ENCODE measurements at regions of chr7 and their contacts with region 1.

Region 1: DNA sequence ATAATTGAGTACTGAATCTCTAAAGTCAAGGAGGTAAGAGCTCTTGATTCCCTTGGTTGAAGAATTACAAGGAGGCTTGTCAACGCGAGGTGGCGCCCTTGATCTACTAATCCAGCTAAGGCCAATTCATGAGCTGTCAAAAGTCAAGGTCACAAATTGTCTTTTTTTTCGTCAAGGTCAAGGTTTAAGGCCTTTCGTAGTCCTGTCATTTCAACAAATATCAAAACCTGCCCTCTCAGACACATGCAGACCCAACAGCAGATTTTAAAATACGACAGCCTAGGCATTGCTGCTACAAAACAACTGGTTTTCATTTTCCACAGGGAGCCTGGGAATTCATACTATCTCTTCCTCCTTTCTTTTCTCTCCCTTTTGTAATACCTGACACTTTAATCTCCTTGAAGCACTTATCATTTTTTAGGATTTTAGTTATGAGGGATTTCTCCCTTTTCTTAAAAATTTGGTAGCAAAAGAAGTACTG is 3.6 kb downstream of the HOXA13 start:
- DNase-seq: peak; percentile 67 to 89 (median 83)
- ATAC-seq: no peak
- H3K4me3 ChIP-seq: no peak overlapping the region
- H3K4me3 Mint-ChIP-seq: no peak overlapping the region
- H3K27ac ChIP-seq: no peak overlapping the region
- H3K27ac Mint-ChIP-seq: no peak overlapping the region
- H3K4me1 ChIP-seq: peaks cover 46% of the 10 kb centered on the region
- H3K4me1 Mint-ChIP-seq: peaks cover 33% of the 10 kb centered on the region
- H3K27me3 ChIP-seq: peaks cover 69 to 71% of the 10 kb centered on the region in 2 experiments
- H3K27me3 Mint-ChIP-seq: peaks cover 80% of the 10 kb centered on the region
- CTCF ChIP-seq: peak; percentile 78

Region 2: GRCh38 chr7:25851332-25852210 is 1344.8 kb before region 1 on chr7:
- CTCF ChIA-PET with region 1: no interaction called
- POLR2A ChIA-PET with region 1: no interaction called
- intact Hi-C with region 1: loop called in 1 of 2 experiments (anchors 10 kb)
- DNase-seq: peak in 6 of 9 experiments; percentile 24 to 69 (median 56)
- ATAC-seq: peak; percentile 70
- H3K4me3 ChIP-seq: no peak overlapping the region
- H3K4me3 Mint-ChIP-seq: peak overlapping the region; percentile 65
- H3K27ac ChIP-seq: no peak overlapping the region
- H3K27ac Mint-ChIP-seq: no peak overlapping the region
- H3K4me1 ChIP-seq: peaks cover 17% of the 10 kb centered on the region
- H3K4me1 Mint-ChIP-seq: peaks cover 11% of the 10 kb centered on the region
- H3K27me3 ChIP-seq: peaks cover 43% of the 10 kb centered on the region in 2 experiments
- H3K27me3 Mint-ChIP-seq: peaks cover 68% of the 10 kb centered on the region
- CTCF ChIP-seq: peak; percentile 48

Region 3: DNA sequence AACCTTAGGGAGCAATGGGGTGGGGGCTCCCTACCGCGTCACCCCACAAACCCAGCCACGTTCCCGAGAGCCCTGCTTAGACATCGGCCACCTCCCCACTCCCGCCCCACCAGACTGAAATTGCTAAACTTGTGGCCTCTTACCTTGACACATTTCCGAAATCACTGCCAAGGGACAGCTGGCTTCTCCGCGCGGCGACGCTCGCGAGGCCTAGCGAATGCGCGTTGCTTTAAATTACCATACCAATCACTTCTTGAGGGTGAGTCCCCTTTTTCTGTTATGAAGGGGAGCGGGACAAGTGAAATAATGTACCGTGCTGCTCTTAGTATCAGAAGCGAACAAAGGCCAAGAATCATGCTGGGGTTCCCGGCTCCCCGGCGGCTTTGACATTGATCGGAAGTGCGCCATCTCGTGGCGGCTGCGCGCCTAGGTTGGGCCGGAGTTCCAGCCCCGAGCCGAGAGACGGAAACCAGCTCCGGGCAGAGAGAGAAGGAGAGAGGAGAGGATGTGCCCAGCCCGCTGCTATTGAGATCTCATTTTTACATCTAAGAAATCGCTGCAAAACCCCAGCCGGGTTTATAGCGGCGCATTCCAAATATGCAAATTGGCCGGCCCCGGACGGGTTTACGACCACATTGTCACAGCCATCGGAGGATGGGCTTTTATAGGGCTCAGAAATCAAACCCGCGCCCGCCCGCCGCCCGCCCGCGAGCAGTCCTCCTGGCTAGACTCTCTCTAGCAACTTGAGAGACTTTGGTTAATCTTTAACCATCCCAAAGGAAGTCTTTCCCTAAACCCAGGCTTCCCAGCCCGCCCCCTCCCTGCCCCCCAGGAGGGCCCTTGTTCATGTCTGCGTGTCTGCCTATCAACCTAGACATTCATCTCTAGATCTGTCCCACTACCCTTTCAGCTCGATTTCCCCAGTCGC is 16.6 kb before region 1 on chr7:
- CTCF ChIA-PET with region 1: interaction called, 30 read pairs
- POLR2A ChIA-PET with region 1: interaction called, 3 read pairs
- intact Hi-C with region 1: no loop called
- DNase-seq: peak in 8 of 9 experiments; percentile 47 to 79 (median 64)
- ATAC-seq: peak; percentile 77
- H3K4me3 ChIP-seq: no peak overlapping the region
- H3K4me3 Mint-ChIP-seq: peak overlapping the region; percentile 61
- H3K27ac ChIP-seq: no peak overlapping the region
- H3K27ac Mint-ChIP-seq: no peak overlapping the region
- H3K4me1 ChIP-seq: peaks cover 17% of the 10 kb centered on the region
- H3K4me1 Mint-ChIP-seq: peaks cover 24% of the 10 kb centered on the region
- H3K27me3 ChIP-seq: peaks cover 53 to 57% of the 10 kb centered on the region in 2 experiments
- H3K27me3 Mint-ChIP-seq: peaks cover 66% of the 10 kb centered on the region
- CTCF ChIP-seq: peak; percentile 89

Region 4: GRCh38 chr7:27576360-27576944 is 380.1 kb after region 1 on chr7:
- CTCF ChIA-PET with region 1: interaction called, 12 read pairs
- POLR2A ChIA-PET with region 1: no interaction called
- intact Hi-C with region 1: loop called (anchors 1 to 2 kb)
- DNase-seq: peak in 2 of 9 experiments; percentile 30 to 47
- ATAC-seq: no peak
- H3K4me3 ChIP-seq: no peak overlapping the region
- H3K4me3 Mint-ChIP-seq: no peak overlapping the region
- H3K27ac ChIP-seq: no peak overlapping the region
- H3K27ac Mint-ChIP-seq: no peak overlapping the region
- H3K4me1 ChIP-seq: no peaks in the 10 kb centered on the region
- H3K4me1 Mint-ChIP-seq: no peaks in the 10 kb centered on the region
- H3K27me3 ChIP-seq: no peaks in the 10 kb centered on the region
- H3K27me3 Mint-ChIP-seq: no peaks in the 10 kb centered on the region
- CTCF ChIP-seq: peak; percentile 69

Region 5: GRCh38 chr7:27739909-27740448 is 543.7 kb after region 1 on chr7 and contains the start of gene TAX1BP1:
- CTCF ChIA-PET with region 1: no interaction called
- POLR2A ChIA-PET with region 1: no interaction called
- intact Hi-C with region 1: loop called in 1 of 2 experiments (anchors 5 kb)
- DNase-seq: peak; percentile 88 to 98 (median 96)
- ATAC-seq: peak; percentile 91
- H3K4me3 ChIP-seq: peak within 1 kb of the TSS; percentile 97 to 100
- H3K4me3 Mint-ChIP-seq: peak within 1 kb of the TSS; percentile 99
- H3K27ac ChIP-seq: peak within 1 kb of the TSS; percentile 97 to 99
- H3K27ac Mint-ChIP-seq: peak within 1 kb of the TSS; percentile 99
- H3K4me1 ChIP-seq: peaks cover 27% of the 10 kb centered on the region
- H3K4me1 Mint-ChIP-seq: peaks cover 40% of the 10 kb centered on the region
- H3K27me3 ChIP-seq: no peaks in the 10 kb centered on the region
- H3K27me3 Mint-ChIP-seq: no peaks in the 10 kb centered on the region
- CTCF ChIP-seq: no peak
- total RNA-seq, gene TAX1BP1: 132 to 139 TPM

Region 6: DNA sequence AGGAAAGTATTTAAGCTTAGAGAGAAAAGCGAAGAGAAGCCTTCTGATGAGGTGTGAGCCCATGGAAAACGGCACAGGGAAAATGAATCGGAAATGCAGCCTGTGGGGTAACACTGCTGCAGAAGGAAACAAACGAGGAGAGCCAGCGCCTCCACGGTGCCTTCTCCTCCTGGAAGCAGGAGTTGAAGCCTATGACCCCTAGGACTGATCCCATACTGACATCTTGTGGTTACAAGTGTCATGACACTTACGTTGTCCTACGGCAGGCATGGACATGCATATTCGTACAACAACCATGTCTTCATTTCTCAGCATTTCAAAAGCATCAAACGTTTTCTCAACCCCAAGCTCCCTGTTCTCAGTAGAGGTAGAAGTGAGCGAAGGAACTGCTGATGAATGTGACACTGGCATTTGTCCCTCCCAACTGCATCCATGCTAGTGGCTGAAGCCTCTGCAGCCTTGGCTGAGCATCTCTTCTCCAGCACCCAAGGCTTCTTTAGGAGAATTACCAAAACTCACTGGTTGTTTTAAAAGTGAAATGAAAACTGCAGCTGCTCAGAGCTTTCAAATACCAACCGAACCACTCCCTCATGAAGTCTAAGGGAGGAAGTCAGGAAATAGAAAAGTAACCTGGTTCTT is 824.1 kb after region 1 on chr7:
- CTCF ChIA-PET with region 1: interaction called, 33 read pairs
- POLR2A ChIA-PET with region 1: no interaction called
- intact Hi-C with region 1: loop called (anchors 1 kb)
- DNase-seq: peak in 6 of 9 experiments; percentile 10 to 71 (median 44)
- ATAC-seq: peak; percentile 73
- H3K4me3 ChIP-seq: no peak overlapping the region
- H3K4me3 Mint-ChIP-seq: no peak overlapping the region
- H3K27ac ChIP-seq: no peak overlapping the region
- H3K27ac Mint-ChIP-seq: no peak overlapping the region
- H3K4me1 ChIP-seq: no peaks in the 10 kb centered on the region
- H3K4me1 Mint-ChIP-seq: peaks cover 4% of the 10 kb centered on the region
- H3K27me3 ChIP-seq: no peaks in the 10 kb centered on the region
- H3K27me3 Mint-ChIP-seq: no peaks in the 10 kb centered on the region
- CTCF ChIP-seq: peak; percentile 69

Region 7: DNA sequence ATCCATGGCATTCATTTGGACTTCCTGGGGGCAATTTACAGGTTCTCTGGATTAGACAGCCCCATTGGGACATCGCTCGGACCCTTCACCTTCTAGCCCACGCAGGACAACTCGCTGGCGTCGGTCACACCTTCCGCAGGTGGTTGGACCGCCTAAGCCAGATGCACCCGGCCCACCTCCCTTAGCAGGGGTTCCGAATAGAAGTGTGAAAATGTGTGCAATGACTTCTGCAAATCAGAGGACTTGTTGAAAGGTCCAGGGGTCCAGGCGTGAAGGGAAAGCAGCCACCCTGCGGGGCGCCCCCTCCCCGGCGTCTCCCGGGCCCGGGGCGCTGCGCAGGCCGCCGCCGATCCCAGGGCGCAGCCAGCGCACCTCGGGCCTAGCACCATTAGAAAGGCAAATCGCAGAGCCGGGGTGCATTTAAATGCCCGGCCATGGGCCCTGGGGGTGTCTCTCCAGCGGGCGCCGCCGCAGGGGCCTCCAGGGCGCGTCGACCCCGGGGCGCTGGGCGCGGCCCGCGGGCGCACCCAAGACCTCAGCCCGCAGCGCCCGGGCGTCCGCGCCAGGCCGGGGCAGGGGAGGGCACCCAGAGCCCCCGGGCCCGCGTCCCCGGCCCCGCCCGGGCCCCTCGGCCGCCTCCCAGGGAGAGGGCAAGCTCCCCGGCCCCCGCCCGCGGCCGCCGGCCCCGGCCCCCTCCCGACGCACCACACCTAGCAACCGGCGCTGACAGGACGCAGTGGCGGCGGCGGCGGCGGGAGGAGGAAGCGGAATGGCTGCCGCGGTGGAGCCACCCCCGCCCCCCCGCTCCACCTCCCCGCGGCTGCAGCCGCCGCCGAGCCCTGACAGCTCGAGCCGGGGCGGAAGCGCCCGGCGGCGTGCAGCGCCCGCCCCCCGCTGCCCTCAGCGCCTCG is 983.0 kb after region 1 on chr7:
- CTCF ChIA-PET with region 1: no interaction called
- POLR2A ChIA-PET with region 1: no interaction called
- intact Hi-C with region 1: loop called in 1 of 2 experiments (anchors 10 kb)
- DNase-seq: peak; percentile 45 to 88 (median 74)
- ATAC-seq: peak; percentile 70
- H3K4me3 ChIP-seq: peak overlapping the region; percentile 27 to 38
- H3K4me3 Mint-ChIP-seq: peak overlapping the region; percentile 82
- H3K27ac ChIP-seq: peak overlapping the region; percentile 12 to 21
- H3K27ac Mint-ChIP-seq: peak overlapping the region; percentile 60
- H3K4me1 ChIP-seq: peaks cover 7% of the 10 kb centered on the region
- H3K4me1 Mint-ChIP-seq: peaks cover 15% of the 10 kb centered on the region
- H3K27me3 ChIP-seq: no peaks in the 10 kb centered on the region
- H3K27me3 Mint-ChIP-seq: no peaks in the 10 kb centered on the region
- CTCF ChIP-seq: no peak

Region 8: DNA sequence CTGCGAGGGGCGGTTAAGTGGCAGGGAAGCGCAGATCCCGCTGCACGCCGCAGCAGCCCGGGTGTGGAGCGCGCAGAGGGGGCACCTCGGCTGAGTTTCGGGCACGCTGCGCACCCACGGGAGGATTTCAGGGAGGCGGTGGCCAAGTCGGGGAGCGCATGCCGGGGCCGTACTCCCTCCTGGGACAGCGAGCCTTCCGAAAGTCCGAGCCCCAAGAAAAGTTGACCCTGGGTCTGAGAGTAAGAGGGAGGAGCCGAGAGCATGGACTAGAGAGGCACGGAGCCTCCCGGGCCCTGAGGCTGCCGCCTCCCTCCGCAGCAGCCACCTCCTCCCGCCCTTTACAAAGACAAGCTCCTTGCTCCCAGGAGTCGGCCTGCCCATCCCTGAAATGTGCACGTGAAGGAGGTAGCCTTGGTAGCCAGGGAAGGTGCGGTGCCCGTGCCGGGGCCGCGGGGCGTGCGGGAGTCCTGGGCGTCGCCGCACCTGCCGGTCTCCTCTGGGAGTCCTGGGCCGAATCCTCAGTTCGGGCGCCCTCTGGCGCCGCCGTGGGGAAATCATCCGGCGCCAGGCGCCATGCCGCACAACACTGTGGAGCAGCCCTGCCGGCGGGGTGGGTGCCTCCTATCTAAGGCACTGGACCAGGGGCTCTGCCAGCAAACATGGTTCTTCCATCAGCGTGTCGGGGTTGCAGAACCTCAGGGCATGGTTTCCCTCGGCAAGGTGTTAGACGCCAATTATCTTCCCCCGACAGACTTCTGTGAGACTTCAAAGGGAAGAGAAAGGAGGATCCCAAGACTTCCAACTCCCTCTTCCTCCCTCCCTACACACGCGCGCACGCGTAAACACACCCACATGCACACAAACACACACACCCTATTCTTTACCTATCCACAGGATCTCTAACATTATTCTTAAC is 1657.8 kb after region 1 on chr7:
- CTCF ChIA-PET with region 1: no interaction called
- POLR2A ChIA-PET with region 1: no interaction called
- intact Hi-C with region 1: no loop called
- DNase-seq: peak; percentile 39 to 83 (median 59)
- ATAC-seq: peak; percentile 72
- H3K4me3 ChIP-seq: peak overlapping the region; percentile 45 to 62
- H3K4me3 Mint-ChIP-seq: peak overlapping the region; percentile 78
- H3K27ac ChIP-seq: no peak overlapping the region
- H3K27ac Mint-ChIP-seq: no peak overlapping the region
- H3K4me1 ChIP-seq: peaks cover 7% of the 10 kb centered on the region
- H3K4me1 Mint-ChIP-seq: peaks cover 9% of the 10 kb centered on the region
- H3K27me3 ChIP-seq: peaks cover 12% of the 10 kb centered on the region in 2 experiments
- H3K27me3 Mint-ChIP-seq: peaks cover 47% of the 10 kb centered on the region
- CTCF ChIP-seq: peak; percentile 65